Activated T-helper 1 cell treated with anti-CD3 and anti-CD28 coated beads, Interleukin-12 subunit alpha, Interleukin-12 subunit beta, Interleukin-2, Interleukin-4 antibody, amounts not matched to agents 30 ng/mL and 10 ng/mL and 1 ng/mL, durations not matched to agents 14 hours and 24 hours and 36 hours (primary cell): ENCODE measurements at regions of chr14 and their contacts with region 1.

Region 1: DNA sequence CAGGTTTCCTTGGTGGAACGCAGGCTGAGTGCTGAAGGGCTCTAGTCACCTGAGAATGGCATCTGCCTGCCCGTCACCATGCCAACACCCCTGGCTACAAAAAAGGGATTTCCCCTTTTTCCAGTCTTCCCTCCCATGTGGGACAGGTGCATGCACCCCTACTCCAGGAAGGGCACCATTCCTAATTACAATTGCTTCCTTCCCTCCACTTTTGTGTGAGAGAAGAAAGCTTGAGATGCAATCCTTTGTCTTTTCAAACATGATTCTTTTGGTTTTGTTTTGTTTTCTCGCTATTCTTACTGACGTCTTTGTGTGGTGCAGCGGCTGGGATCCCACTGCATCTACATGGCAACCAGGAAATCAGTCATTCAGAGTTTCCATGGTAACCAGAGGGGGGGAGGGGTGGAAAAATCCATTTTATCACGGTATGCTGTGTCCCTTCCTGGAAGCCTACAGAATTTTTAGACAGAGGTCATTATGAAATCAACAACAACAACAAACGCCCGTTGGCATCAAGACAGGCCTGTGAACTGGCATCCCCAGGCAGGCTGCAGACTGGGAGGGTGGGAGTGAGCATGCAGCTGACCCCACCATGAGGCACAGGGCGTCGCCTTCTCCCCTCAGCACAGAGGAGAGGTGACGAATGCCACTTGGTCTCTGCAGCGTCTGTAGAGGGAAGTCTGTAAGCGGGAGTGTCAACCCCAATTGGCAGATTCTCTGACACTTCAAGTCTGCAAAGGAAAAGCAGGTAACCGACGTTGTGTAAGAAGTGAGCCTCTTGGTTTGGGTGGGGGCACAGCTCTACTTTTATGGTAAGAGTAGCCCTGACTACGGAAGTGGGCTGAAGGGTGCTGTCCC is 13.6 kb upstream of the GNG2 start:
- DNase-seq: peak; percentile 86
- H3K4me3 Mint-ChIP-seq: peak overlapping the region; percentile 85
- H3K27ac Mint-ChIP-seq: peak overlapping the region; percentile 98
- H3K4me1 Mint-ChIP-seq: peaks cover 60% of the 10 kb centered on the region
- H3K27me3 Mint-ChIP-seq: no peaks in the 10 kb centered on the region

Region 2: DNA sequence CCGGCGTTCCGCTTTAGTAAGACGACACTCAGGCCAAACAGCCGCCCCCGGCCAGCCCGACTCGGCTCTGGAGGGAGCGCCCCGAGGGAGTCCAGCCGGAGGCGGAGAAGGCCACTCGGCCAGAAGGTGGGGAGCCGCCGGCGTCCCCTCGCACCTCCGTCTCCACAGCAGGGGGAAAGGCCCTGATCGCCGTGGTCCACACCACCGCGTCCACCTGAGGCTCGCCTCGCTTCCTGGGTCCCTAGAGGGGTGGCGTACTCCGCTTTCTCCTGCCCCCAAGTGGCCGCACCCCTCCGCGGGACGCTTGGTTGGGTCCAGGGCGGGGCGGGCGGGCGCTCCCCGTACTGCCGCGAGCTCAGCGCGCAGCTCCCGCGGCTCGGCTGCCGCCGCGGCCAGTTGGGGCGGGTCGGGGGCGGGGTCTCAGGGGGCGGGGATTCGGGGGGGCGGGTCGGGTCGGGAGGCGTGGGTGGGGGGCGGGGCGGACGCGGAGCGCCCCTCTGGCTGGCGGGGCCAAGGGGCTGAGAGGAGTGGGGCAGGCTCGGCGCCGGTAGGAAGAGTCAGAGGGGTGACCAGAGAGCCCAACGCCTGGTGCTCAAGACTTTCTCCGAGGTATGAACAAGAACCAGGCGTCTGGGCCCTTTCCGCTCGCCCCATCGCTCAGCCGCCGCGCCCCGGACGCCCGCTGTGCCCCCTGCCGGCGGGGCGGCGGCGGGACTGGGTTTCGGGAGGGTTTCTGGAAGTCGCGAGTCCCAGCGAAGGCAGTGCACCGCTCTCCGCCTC is 195.3 kb before region 1 on chr14 and contains the start of gene FRMD6:
- intact Hi-C with region 1: loop called (anchors 2 kb)
- DNase-seq: peak; percentile 74
- H3K4me3 Mint-ChIP-seq: peak within 1 kb of the TSS; percentile 81
- H3K27ac Mint-ChIP-seq: peak within 1 kb of the TSS; percentile 74
- H3K4me1 Mint-ChIP-seq: peaks cover 18% of the 10 kb centered on the region
- H3K27me3 Mint-ChIP-seq: peaks cover 7% of the 10 kb centered on the region
- total RNA-seq, gene FRMD6: 5.9 and 6.1 TPM in 2 replicates

Region 3: DNA sequence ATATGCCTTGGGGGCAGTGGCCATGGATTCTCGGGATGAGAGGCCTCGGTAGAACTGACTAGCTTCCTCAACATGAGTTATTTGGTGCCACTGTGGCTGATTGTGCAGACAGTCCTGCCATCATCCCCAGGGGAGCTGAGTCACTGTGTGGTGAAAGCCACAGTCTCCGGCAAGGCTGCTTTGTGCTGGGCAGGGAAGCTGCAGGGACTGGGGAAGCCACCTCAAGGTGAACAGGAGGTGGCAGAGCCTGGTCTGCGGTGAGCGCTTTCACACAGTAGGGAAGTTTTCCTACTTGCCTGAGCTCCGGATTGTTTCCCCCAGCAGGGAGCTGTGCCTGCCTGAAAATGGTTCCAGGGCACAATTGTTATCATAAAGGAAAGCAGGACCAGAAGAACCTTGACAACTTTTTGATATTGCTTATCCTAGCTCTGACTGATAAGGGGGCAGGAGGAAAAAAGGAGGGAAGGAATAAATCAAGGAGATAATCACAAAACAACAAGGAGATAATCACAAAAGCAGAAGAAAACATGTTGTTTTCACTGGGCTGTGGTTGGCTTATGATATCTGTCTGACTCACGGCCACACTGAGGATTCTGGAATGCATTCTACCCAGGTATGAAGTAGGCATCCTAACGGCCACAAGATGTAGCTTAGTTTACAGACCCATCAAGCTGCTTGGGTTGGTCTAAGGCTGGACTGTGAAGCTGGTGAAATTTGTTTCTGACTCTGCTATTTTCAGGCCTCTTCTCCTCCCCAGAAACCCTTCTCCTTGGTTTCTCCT is 18.7 kb before region 1 on chr14:
- intact Hi-C with region 1: loop called (anchors 1 kb)
- DNase-seq: peak; percentile 57
- H3K4me3 Mint-ChIP-seq: no peak overlapping the region
- H3K27ac Mint-ChIP-seq: no peak overlapping the region
- H3K4me1 Mint-ChIP-seq: no peaks in the 10 kb centered on the region
- H3K27me3 Mint-ChIP-seq: peaks cover 4% of the 10 kb centered on the region

Region 4: GRCh38 chr14:51873221-51873893 is 26.5 kb after region 1 on chr14:
- intact Hi-C with region 1: loop called (anchors 1 kb)
- DNase-seq: peak; percentile 24
- H3K4me3 Mint-ChIP-seq: peak overlapping the region; percentile 59
- H3K27ac Mint-ChIP-seq: peak overlapping the region; percentile 80
- H3K4me1 Mint-ChIP-seq: peaks cover 63% of the 10 kb centered on the region
- H3K27me3 Mint-ChIP-seq: no peaks in the 10 kb centered on the region

Region 5: DNA sequence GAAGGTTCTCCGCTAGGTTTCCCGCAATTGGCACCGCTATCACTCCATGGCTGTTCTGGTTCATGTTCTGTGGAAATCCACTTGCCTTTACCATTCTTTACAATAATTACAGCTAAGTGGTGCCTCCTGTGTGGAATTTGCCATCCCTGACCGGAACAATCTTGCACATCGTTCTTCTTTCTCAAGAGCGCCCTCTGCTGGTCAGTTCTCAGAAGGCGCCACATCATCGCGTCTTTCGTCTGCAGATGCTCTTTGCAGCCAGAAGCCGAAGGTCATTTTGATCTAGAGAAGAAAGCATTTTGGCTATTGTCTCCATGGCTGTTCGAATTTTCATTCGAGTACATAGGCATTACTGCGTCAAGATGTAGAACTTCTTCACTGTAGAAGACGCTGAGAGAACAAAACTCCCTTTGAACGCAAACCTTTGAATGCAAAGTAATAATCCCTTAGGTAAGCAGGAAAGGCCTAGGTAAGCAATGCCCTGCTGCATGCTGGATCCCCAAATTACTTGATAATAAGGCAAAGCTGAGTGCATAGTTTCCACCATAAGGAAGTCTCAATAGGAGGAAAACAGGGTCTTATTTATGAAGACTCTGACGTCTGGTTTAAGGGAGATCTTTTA is 132.3 kb after region 1 on chr14:
- intact Hi-C with region 1: loop called (anchors 1 kb)
- DNase-seq: peak; percentile 70
- H3K4me3 Mint-ChIP-seq: no peak overlapping the region
- H3K27ac Mint-ChIP-seq: no peak overlapping the region
- H3K4me1 Mint-ChIP-seq: peaks cover 22% of the 10 kb centered on the region
- H3K27me3 Mint-ChIP-seq: peaks cover 2% of the 10 kb centered on the region

Region 6: DNA sequence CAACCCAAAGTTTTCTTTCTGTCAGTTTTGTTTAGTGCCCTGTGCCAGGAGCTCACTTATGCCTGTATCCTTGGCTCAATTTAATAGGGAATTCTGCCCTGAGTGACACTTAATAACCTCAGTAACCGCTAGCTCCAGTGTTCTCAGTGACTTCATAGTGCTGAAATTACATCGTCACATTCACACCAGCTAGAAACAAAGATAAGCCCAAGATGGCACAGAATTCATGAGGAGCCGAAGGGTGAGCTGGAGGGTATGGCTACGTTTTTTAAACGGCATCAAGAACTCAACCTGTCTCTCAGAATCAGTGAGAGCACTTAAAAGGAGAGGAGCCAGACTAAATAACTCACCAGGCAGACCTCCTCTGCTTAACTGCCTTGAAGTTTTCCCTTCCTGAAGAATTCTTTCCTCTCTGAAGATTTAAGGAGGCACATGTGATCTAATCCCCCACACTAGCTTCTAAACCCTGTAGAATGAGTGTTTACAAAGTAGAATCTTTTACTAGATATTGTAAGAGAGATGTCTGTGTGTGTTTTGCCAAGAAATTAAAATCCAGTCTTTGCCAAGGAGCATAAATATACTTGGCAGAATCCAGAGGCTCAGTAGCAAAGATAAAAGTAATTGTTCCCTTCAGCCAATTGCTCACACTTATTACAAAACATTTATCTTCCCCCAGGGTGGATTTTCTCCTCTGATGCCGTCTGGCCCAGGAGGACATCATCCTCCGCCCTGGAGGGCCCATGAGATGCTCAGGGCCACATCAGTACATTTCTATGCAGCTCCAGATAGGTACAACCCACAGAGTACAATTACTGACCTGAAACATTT is 504.6 kb after region 1 on chr14:
- intact Hi-C with region 1: loop called (anchors 2 kb)
- DNase-seq: peak; percentile 8
- H3K4me3 Mint-ChIP-seq: peak overlapping the region; percentile 75
- H3K27ac Mint-ChIP-seq: peak overlapping the region; percentile 96
- H3K4me1 Mint-ChIP-seq: peaks cover 73% of the 10 kb centered on the region
- H3K27me3 Mint-ChIP-seq: no peaks in the 10 kb centered on the region